Posterior vena cava (tissue), 2 donors: ENCODE measurements at regions of chr15 and their contacts with region 1.

Region 1: GRCh38 chr15:70264014-70264582 is 166.4 kb upstream of the TLE3 start:
- DNase-seq: no peak

Region 2: DNA sequence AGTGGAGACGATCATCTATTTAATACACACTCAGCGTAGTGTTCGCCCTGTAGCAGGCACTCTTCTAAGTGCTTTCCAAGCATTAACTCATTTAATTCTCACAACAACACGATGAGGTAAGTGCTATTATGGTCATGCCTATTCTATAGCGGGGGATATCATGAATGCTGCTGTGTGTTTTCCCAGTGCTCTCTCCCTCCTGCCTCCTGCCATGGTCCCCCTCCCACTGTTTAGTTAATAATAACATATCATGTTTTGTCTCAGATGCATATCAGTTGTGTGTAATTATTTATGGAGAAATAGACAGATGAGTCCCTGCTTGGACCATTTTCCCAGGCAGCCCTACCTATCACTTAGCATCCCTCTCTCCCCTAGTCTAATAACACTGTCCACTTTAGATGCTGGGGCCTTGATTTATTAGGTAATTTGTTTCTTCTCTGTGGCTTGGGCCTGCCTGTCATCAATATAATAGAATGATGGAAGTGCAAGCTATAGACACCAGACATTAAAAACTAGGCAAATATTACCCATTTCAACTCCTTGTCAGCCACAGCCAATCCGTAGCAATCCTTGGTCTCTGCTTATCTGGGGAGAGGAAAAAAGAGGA is 43.5 kb before region 1 on chr15:
- intact Hi-C with region 1: loop called in 1 of 2 experiments (anchors 1 kb)
- DNase-seq: no peak

Region 3: DNA sequence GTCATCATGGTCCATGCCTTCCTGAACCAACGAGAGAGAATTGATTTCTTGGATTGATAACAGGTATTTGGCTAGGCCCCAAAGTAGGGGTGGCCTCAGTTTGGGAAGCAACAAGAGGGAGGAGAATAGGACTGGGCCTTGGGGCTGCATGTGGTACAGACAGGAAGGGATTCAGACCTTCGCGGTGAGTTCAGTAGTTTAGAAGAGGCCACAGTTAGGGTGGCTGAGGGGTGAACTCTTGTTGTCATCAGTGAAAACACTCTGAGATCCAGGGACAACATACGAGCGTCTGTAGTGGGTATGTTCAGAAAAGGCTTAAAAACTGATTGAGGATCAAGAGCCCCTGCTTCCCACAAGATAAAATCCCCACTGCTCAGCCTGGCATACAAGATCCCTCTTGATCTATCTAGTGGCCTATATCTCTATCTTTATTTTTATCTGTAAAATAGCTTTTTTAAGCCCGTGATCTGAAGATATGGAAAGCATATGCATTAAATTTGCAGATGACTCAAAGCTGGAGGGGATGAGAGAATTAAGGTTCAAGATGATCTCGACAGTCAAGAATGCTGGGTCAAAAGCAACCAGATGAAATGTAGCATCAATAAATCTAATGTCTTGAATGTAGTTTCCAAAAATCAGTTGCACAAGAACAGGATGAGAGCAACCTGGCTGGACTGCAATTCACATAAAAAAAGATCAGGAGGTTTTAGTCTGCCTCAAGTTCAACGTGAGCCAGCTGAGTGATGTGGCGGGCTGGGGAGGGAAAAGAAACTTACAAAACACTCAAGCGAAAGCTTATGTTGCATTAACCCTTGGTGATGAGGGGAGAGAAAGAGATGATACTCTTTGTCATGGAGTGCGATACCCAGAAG is 54.7 kb after region 1 on chr15:
- intact Hi-C with region 1: loop called in 1 of 2 experiments (anchors 5 kb)
- DNase-seq: peak; percentile 90